Heart right ventricle (tissue), 16 donors: ENCODE measurements at regions of chr10 and their contacts with region 1.

Region 1: GRCh38 chr10:28241741-28242399 is 61.0 kb downstream of the MPP7 start:
- DNase-seq: peak in 1 of 2 donors; percentile 28
- ATAC-seq: peak in 6 of 8 donors; percentile 56 to 81 (median 71)
- H3K4me3 ChIP-seq: no peak overlapping the region
- H3K27ac ChIP-seq: no peak overlapping the region
- H3K4me1 ChIP-seq: peaks cover 0 to 20% (median 0%) of the 10 kb centered on the region in 9 donors
- H3K27me3 ChIP-seq: no peaks in the 10 kb centered on the region
- CTCF ChIP-seq: peak; percentile 75 to 94 (median 91)

Region 2: DNA sequence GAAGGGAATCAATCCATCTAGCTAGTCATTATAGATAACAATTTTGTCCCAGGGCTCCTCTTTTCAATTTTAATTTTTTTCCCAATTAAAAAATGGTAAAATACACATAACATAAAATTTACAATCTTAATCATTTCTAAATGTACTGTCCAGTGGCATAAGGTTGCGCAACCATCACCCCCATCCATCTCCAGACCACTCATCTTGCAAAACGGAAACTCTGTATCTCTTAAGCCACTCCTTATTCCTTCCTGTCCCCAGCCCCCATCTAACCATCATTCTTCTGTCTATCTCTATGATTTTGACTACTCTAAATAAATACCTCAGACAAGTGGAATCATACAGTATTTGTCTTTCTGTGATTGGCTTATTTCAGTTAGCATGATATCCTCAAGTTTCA is 783.9 kb before region 1 on chr10:
- intact Hi-C with region 1: loop called in 1 of 10 experiments (anchors 10 kb)
- DNase-seq: no peak
- ATAC-seq: no peak
- H3K4me3 ChIP-seq: no peak overlapping the region
- H3K27ac ChIP-seq: no peak overlapping the region
- H3K4me1 ChIP-seq: peaks cover 0 to 13% (median 0%) of the 10 kb centered on the region in 9 donors
- H3K27me3 ChIP-seq: peaks cover 0 to 15% (median 2%) of the 10 kb centered on the region in 7 donors
- CTCF ChIP-seq: no peak

Region 3: DNA sequence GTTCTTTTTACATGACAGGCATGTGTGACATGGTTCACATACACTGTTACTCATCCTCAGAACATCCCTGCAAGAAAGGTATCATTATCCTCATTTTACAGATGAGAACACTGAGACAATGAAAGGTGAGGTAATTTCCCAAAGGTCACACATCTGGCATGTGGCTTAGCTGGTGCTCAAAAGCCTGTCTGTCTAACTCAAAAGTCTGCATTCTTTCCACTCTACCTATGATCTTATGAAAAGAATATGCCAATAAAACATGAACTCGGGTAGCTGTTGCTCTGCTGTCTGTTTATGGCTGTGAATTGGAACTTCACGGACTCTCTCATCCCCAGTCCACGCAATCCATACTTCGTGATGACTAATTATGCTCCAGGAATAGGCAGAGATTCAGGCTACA is 164.0 kb before region 1 on chr10:
- intact Hi-C with region 1: no loop called
- DNase-seq: no peak
- ATAC-seq: no peak
- H3K4me3 ChIP-seq: no peak overlapping the region
- H3K27ac ChIP-seq: no peak overlapping the region
- H3K4me1 ChIP-seq: no peaks in the 10 kb centered on the region
- H3K27me3 ChIP-seq: no peaks in the 10 kb centered on the region
- CTCF ChIP-seq: no peak

Region 4: GRCh38 chr10:28111712-28112111 is 130.2 kb before region 1 on chr10:
- intact Hi-C with region 1: no loop called
- DNase-seq: no peak
- ATAC-seq: no peak
- H3K4me3 ChIP-seq: no peak overlapping the region
- H3K27ac ChIP-seq: no peak overlapping the region
- H3K4me1 ChIP-seq: peaks cover 0 to 2% (median 0%) of the 10 kb centered on the region in 9 donors
- H3K27me3 ChIP-seq: no peaks in the 10 kb centered on the region
- CTCF ChIP-seq: no peak

Region 5: DNA sequence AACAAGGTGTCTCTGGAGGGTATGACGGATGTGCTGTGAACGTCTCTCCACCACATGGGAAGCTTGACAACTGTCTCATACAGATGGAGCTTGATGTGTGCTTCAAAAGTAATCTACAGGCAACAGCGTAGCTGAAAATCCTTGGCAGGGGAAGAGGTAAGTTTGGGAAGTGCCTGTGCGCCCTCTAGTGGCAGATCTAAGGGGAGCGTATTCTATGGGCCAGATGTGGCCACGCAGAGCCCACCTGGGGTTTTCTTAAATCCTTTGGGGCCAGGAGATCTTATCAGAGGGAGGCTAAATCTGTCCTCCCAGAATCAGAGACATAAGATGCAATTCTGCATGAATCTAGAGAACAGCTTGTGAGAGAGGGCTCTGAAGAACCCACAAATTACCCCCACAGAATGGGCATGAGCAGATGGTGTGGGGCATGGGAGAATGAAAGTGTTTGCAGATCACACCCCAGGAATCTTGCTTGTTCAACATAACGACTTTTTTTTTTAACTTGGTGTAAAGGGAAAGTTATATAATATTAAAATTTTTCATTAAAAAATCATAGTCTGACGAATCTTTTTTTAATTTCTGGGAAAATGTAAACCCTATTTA is 152.2 kb after region 1 on chr10:
- intact Hi-C with region 1: no loop called
- DNase-seq: peak; percentile 30 to 45
- ATAC-seq: peak; percentile 61 to 90 (median 79)
- H3K4me3 ChIP-seq: no peak overlapping the region
- H3K27ac ChIP-seq: no peak overlapping the region
- H3K4me1 ChIP-seq: peaks cover 0 to 7% (median 0%) of the 10 kb centered on the region in 9 donors
- H3K27me3 ChIP-seq: peaks cover 0 to 3% (median 0%) of the 10 kb centered on the region in 7 donors
- CTCF ChIP-seq: peak; percentile 72 to 95 (median 91)